ENCODE measurements at regions of chr7 and their contacts with region 1.

Region 1: GRCh38 chr7:18064242-18064838 is 36.7 kb upstream of the PRPS1L1 start:
- DNase-seq: peak; percentile 7
- H3K4me3 ChIP-seq: no peak overlapping the region
- H3K27ac ChIP-seq: no peak overlapping the region
- H3K4me1 ChIP-seq: no peaks in the 10 kb centered on the region
- H3K27me3 ChIP-seq: peaks cover 3% of the 10 kb centered on the region
- CTCF ChIP-seq: peak; percentile 69 to 74

Region 2: DNA sequence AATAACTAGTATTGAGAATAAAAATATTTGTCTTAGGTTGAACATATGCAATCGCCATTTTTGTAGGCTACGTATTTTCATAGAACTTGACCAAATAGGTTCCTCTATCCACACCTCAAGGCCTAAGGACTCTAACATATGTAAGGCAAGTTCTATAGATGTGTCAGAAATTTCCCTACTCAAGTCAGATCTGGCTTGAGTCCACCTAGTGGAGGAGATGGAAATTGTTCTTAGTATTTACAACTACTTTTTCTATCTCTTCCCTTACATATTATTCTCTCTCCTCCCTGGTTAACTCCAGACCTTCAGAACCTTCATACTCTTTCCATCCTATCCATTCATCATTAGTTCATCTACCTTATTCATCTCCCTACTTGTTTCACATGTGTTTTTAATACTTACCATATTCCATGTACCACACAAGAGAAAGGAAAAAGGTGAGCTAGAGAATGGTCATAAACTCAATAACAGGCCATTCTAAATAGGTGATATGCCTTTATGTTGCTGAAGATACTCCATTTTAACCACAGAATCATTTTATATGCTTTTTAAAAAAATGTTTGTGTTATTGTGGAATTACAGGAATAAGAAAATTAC is 256.7 kb after region 1 on chr7:
- CTCF ChIA-PET with region 1: no interaction called
- dilution Hi-C with region 1: no loop called
- in situ Hi-C with region 1: no loop called
- intact Hi-C with region 1: loop called (anchors 5 kb)
- DNase-seq: peak; percentile 29
- H3K4me3 ChIP-seq: no peak overlapping the region
- H3K27ac ChIP-seq: no peak overlapping the region
- H3K4me1 ChIP-seq: no peaks in the 10 kb centered on the region
- H3K27me3 ChIP-seq: no peaks in the 10 kb centered on the region
- CTCF ChIP-seq: peak; percentile 52 to 69